ENCODE measurements at regions of chr12 and their contacts with region 1.

Region 1: GRCh38 chr12:128109636-128110035 is 157.3 kb upstream of the TMEM132C start:
- DNase-seq: no peak
- ATAC-seq: no peak
- H3K4me3 ChIP-seq: no peak overlapping the region
- H3K27ac ChIP-seq: no peak overlapping the region
- H3K4me1 ChIP-seq: no peaks in the 10 kb centered on the region
- H3K27me3 ChIP-seq: no peaks in the 10 kb centered on the region
- CTCF ChIP-seq: no peak
- POLR2A ChIP-seq: no peak
- RAD21 ChIP-seq: no peak

Region 2: DNA sequence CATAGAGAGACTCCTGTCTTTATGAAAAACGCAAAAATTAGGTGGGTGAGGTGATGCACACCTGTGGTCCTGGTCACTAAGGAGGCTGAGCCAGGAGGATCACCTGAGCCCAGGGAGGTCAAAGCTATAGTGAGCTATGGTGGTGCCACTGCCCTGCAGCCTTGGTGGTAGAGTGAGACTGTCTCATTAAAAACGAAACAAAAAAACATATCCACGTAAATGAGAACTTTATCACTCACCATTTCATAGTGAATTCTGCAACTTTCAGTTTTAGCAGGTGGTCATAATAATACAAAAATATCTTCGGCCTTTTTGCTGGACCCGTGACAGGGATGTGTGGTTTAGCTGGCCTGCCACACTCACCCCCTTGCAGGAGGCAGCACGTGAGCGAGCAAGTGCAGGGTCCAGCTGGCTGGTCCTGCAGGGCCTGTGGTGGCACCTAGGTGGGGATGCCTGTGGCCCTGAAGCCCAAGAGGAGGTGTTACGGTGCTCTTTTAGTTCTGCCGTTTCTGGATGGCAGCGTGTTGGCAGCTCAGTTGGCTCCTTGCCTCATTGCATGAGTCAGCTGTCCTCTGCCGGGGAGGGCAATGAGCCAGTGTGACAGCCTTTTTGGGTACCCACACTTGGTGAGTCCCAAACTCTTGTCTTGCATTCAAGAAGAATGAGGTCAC is 1173.3 kb before region 1 on chr12:
- CTCF ChIA-PET with region 1: no interaction called
- POLR2A ChIA-PET with region 1: no interaction called
- dilution Hi-C with region 1: no loop called
- in situ Hi-C with region 1: no loop called
- intact Hi-C with region 1: no loop called
- DNase-seq: no peak
- ATAC-seq: no peak
- H3K4me3 ChIP-seq: no peak overlapping the region
- H3K27ac ChIP-seq: no peak overlapping the region
- H3K4me1 ChIP-seq: no peaks in the 10 kb centered on the region
- H3K27me3 ChIP-seq: no peaks in the 10 kb centered on the region
- CTCF ChIP-seq: no peak
- POLR2A ChIP-seq: no peak
- RAD21 ChIP-seq: no peak

Region 3: DNA sequence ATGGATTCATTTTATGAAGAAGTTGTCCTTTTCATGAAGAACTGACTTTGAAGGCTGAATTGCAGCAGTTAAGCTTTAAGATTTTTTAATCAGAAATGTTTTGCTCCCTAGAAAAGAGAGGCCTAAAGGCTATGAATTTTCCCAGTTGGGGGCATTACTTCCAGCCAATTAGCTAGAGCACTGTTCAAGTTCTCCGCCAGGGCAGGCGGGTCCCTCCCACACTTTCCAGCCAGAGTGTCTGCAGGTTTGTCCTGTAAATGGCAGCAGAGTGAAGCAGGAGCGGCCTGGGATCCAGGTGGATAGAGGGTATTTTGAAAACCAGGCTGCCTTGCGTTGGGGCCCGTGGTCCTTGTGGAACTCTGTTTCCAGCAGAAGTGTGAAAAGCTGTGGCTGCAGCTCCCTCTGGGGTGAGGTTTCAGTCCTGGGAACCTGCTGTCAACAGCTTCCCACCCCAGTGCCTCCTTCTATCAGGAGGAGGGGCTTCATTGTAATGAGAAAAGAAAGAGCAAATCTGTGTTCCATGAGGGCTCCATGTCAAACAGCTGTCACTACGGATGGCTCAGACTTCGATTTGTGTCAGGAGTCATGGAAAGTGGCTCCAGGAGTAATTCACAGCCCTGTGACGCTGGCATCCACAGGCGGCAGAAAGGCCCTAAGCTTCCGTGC is 53.4 kb before region 1 on chr12:
- CTCF ChIA-PET with region 1: no interaction called
- POLR2A ChIA-PET with region 1: no interaction called
- dilution Hi-C with region 1: no loop called
- in situ Hi-C with region 1: no loop called
- intact Hi-C with region 1: no loop called
- DNase-seq: no peak
- ATAC-seq: no peak
- H3K4me3 ChIP-seq: no peak overlapping the region
- H3K27ac ChIP-seq: no peak overlapping the region
- H3K4me1 ChIP-seq: no peaks in the 10 kb centered on the region
- H3K27me3 ChIP-seq: no peaks in the 10 kb centered on the region
- CTCF ChIP-seq: no peak
- POLR2A ChIP-seq: no peak
- RAD21 ChIP-seq: no peak

Region 4: GRCh38 chr12:128190614-128191013 is 81.0 kb after region 1 on chr12:
- CTCF ChIA-PET with region 1: no interaction called
- POLR2A ChIA-PET with region 1: no interaction called
- dilution Hi-C with region 1: no loop called
- in situ Hi-C with region 1: no loop called
- intact Hi-C with region 1: loop called (anchors 5 kb)
- DNase-seq: no peak
- ATAC-seq: no peak
- H3K4me3 ChIP-seq: no peak overlapping the region
- H3K27ac ChIP-seq: no peak overlapping the region
- H3K4me1 ChIP-seq: no peaks in the 10 kb centered on the region
- H3K27me3 ChIP-seq: no peaks in the 10 kb centered on the region
- CTCF ChIP-seq: no peak
- POLR2A ChIP-seq: no peak
- RAD21 ChIP-seq: no peak